ENCODE measurements at regions of chr1 and their contacts with region 1.

Region 1: DNA sequence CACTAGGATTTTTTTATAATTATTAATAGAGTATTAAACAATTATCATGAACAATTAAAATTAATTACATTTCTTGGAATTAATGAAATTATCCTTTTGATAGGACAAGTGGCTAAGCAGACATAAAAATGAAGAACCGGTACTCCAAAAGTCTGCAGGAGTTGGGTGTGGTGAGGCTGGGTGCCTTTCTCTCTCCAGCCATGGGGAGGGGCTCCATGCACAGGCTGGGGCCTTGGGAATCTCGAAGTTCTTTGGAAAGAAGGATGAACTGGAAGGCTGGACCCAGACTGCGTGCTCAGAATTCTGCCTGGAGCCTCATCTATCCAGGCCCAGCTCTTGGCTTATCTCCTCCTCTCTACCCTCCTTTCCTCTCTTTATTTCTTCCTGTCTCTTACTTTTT is 94.1 kb downstream of the ACTL8 start:
- DNase-seq: peak; percentile 25
- ATAC-seq: peak; percentile 78
- H3K4me3 ChIP-seq: no peak overlapping the region
- H3K27ac ChIP-seq: no peak overlapping the region
- H3K4me1 ChIP-seq: no peaks in the 10 kb centered on the region
- H3K27me3 ChIP-seq: peaks cover 13% of the 10 kb centered on the region
- CTCF ChIP-seq: peak; percentile 74
- POLR2A ChIP-seq: no peak
- RAD21 ChIP-seq: peak; percentile 86

Region 2: DNA sequence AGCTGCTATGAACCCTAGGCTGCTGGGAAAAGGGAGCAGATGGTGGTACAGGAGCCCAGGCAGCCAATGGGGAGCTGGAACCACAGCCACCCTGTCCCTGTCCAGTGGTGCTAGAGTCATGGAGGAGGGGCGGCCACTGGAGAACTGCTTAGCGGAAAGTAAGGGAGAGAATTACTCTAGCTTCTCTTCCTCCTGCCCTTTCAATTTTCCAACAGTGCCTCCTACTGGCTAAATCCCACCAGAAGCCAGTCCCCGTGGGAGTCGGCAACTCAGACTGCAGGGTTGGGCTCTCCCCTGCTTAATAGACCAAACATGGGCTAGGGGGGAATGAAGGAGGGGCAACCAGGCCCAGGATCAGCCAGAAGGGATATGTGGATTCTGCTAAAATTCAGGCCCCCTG is 60.4 kb after region 1 on chr1:
- CTCF ChIA-PET with region 1: no interaction called
- POLR2A ChIA-PET with region 1: no interaction called
- dilution Hi-C with region 1: no loop called
- in situ Hi-C with region 1: no loop called
- intact Hi-C with region 1: loop called (anchors 1 kb)
- DNase-seq: peak; percentile 24
- ATAC-seq: peak; percentile 81
- H3K4me3 ChIP-seq: no peak overlapping the region
- H3K27ac ChIP-seq: no peak overlapping the region
- H3K4me1 ChIP-seq: no peaks in the 10 kb centered on the region
- H3K27me3 ChIP-seq: peaks cover 19% of the 10 kb centered on the region
- CTCF ChIP-seq: peak; percentile 57
- POLR2A ChIP-seq: no peak
- RAD21 ChIP-seq: peak; percentile 63

Region 3: GRCh38 chr1:17998889-17999288 is 149.7 kb after region 1 on chr1:
- CTCF ChIA-PET with region 1: no interaction called
- POLR2A ChIA-PET with region 1: no interaction called
- dilution Hi-C with region 1: no loop called
- in situ Hi-C with region 1: no loop called
- intact Hi-C with region 1: loop called (anchors 2 kb)
- DNase-seq: peak; percentile 4
- ATAC-seq: no peak
- H3K4me3 ChIP-seq: no peak overlapping the region
- H3K27ac ChIP-seq: no peak overlapping the region
- H3K4me1 ChIP-seq: no peaks in the 10 kb centered on the region
- H3K27me3 ChIP-seq: no peaks in the 10 kb centered on the region
- CTCF ChIP-seq: peak; percentile 30
- POLR2A ChIP-seq: no peak
- RAD21 ChIP-seq: peak; percentile 12; the same call in 1 of the 2 replicates

Region 4: DNA sequence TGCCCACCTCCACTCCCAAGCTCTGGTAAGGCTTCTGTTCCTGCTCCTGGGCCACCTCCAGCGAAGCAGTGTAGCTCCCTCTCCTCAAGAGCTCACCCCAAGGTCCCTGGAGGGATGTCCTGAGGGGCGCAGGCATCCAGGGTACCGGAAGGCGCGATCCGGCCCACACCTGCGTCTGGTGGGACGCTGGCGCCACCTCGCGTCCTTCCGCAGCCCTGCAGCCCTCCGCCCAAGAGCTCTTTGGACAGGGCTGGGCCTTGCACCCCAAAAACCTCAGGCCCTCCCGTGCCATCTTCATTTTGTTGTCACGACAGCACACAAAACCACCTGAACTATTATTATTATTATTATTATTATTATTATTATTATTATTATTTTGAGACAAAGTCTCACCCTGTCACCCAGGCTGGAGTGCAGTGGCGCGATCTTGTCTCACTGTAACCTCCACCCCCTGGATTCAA is 732.2 kb after region 1 on chr1:
- CTCF ChIA-PET with region 1: no interaction called
- POLR2A ChIA-PET with region 1: no interaction called
- dilution Hi-C with region 1: no loop called
- in situ Hi-C with region 1: no loop called
- intact Hi-C with region 1: loop called (anchors 2 kb)
- DNase-seq: no peak
- ATAC-seq: peak; percentile 72
- H3K4me3 ChIP-seq: no peak overlapping the region
- H3K27ac ChIP-seq: no peak overlapping the region
- H3K4me1 ChIP-seq: no peaks in the 10 kb centered on the region
- H3K27me3 ChIP-seq: no peaks in the 10 kb centered on the region
- CTCF ChIP-seq: peak; percentile 54
- POLR2A ChIP-seq: no peak
- RAD21 ChIP-seq: peak; percentile 57